Ovary (tissue), 10 donors: ENCODE measurements at regions of chr15 and their contacts with region 1.

Region 1: GRCh38 chr15:95464509-95464908 is 866.0 kb upstream of the NR2F2 start:
- DNase-seq: peak; percentile 57 to 83 (median 77)
- H3K4me3 ChIP-seq: no peak overlapping the region
- H3K27ac ChIP-seq: peak overlapping the region in 1 of 2 donors; percentile 77
- H3K4me1 ChIP-seq: peaks cover 11% of the 10 kb centered on the region
- H3K27me3 ChIP-seq: no peaks in the 10 kb centered on the region
- CTCF ChIP-seq: no peak
- EP300 ChIP-seq: no peak
- POLR2A ChIP-seq: no peak

Region 2: GRCh38 chr15:95284933-95285421 is 179.5 kb before region 1 on chr15:
- intact Hi-C with region 1: loop called in 1 of 4 experiments (anchors 5 kb)
- DNase-seq: peak in 2 of 5 donors; percentile 29 to 44
- H3K4me3 ChIP-seq: no peak overlapping the region
- H3K27ac ChIP-seq: peak overlapping the region in 1 of 2 donors; percentile 64
- H3K4me1 ChIP-seq: peaks cover 12% of the 10 kb centered on the region
- H3K27me3 ChIP-seq: no peaks in the 10 kb centered on the region
- CTCF ChIP-seq: peak in 1 of 3 donors; percentile 39
- EP300 ChIP-seq: no peak
- POLR2A ChIP-seq: no peak